ENCODE measurements at regions of chr4 and their contacts with region 1.

Region 1: GRCh38 chr4:188955066-188955465 is 815.8 kb downstream of the TRIML1 start:
- DNase-seq: no peak

Region 2: GRCh38 chr4:189069772-189070171 is 114.7 kb after region 1 on chr4:
- intact Hi-C with region 1: no loop called
- DNase-seq: no peak

Region 3: DNA sequence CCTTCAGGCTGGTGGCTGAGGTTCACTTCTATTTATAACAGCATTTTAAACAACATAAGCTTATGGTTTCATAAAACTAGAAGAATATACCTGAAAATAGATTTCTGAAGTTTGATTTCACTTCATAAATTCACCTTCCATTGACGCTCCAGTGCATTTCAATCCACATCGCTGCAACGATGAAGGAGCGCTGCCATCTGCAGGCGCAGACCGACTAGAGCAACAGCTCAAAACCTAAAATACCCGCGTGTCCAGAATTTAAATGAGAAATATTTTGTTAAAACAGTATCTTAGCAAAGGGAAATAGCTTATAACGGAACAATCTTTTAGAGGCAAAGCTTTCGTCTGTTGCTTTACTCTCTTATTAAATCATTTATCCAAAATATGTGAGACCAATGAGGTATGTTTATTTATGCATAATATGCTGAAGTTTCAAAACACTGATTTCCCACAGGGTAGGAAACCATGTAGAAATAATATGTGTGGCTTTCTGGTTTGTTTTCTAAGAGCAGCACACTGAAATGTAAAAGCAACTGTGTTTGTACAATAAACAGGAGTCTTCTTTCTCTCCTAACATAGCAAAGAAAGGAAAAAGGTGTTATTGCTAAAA is 169.2 kb after region 1 on chr4:
- intact Hi-C with region 1: loop called in 1 of 2 experiments (anchors 10 kb)
- DNase-seq: no peak

Measured in posterior vena cava (tissue), 2 donors.